A673 (cell line): ENCODE measurements at regions of chr19 and their contacts with region 1.

Region 1: GRCh38 chr19:42762782-42763181 is 2.7 kb downstream of the PSG8 start:
- DNase-seq: no peak
- H3K4me3 ChIP-seq: no peak overlapping the region
- H3K27ac ChIP-seq: no peak overlapping the region
- H3K4me1 ChIP-seq: no peaks in the 10 kb centered on the region
- H3K27me3 ChIP-seq: no peaks in the 10 kb centered on the region
- CTCF ChIP-seq: no peak

Region 2: GRCh38 chr19:42606660-42607351 is 156.0 kb before region 1 on chr19:
- CTCF ChIA-PET with region 1: no interaction called
- POLR2A ChIA-PET with region 1: no interaction called
- intact Hi-C with region 1: loop called (anchors 10 kb)
- DNase-seq: peak; percentile 72
- H3K4me3 ChIP-seq: no peak overlapping the region
- H3K27ac ChIP-seq: no peak overlapping the region
- H3K4me1 ChIP-seq: no peaks in the 10 kb centered on the region
- H3K27me3 ChIP-seq: peaks cover 17% of the 10 kb centered on the region
- CTCF ChIP-seq: peak; percentile 97

Region 3: GRCh38 chr19:42693764-42694350 is 68.9 kb before region 1 on chr19:
- CTCF ChIA-PET with region 1: no interaction called
- POLR2A ChIA-PET with region 1: no interaction called
- intact Hi-C with region 1: loop called (anchors 10 kb)
- DNase-seq: peak; percentile 43
- H3K4me3 ChIP-seq: no peak overlapping the region
- H3K27ac ChIP-seq: no peak overlapping the region
- H3K4me1 ChIP-seq: no peaks in the 10 kb centered on the region
- H3K27me3 ChIP-seq: peaks cover 68% of the 10 kb centered on the region
- CTCF ChIP-seq: peak; percentile 62

Region 4: GRCh38 chr19:42881229-42881628 is 118.4 kb after region 1 on chr19:
- CTCF ChIA-PET with region 1: no interaction called
- POLR2A ChIA-PET with region 1: no interaction called
- intact Hi-C with region 1: no loop called
- DNase-seq: peak; percentile 18
- H3K4me3 ChIP-seq: no peak overlapping the region
- H3K27ac ChIP-seq: no peak overlapping the region
- H3K4me1 ChIP-seq: no peaks in the 10 kb centered on the region
- H3K27me3 ChIP-seq: peaks cover 3% of the 10 kb centered on the region
- CTCF ChIP-seq: no peak; the same call in 1 of the 2 replicates

Region 5: GRCh38 chr19:43070875-43071274 is 308.1 kb after region 1 on chr19:
- CTCF ChIA-PET with region 1: no interaction called
- POLR2A ChIA-PET with region 1: no interaction called
- intact Hi-C with region 1: no loop called
- DNase-seq: no peak
- H3K4me3 ChIP-seq: no peak overlapping the region
- H3K27ac ChIP-seq: no peak overlapping the region
- H3K4me1 ChIP-seq: no peaks in the 10 kb centered on the region
- H3K27me3 ChIP-seq: no peaks in the 10 kb centered on the region
- CTCF ChIP-seq: no peak